BJ (cell line): ENCODE measurements at regions of chr11 and their contacts with region 1.

Region 1: DNA sequence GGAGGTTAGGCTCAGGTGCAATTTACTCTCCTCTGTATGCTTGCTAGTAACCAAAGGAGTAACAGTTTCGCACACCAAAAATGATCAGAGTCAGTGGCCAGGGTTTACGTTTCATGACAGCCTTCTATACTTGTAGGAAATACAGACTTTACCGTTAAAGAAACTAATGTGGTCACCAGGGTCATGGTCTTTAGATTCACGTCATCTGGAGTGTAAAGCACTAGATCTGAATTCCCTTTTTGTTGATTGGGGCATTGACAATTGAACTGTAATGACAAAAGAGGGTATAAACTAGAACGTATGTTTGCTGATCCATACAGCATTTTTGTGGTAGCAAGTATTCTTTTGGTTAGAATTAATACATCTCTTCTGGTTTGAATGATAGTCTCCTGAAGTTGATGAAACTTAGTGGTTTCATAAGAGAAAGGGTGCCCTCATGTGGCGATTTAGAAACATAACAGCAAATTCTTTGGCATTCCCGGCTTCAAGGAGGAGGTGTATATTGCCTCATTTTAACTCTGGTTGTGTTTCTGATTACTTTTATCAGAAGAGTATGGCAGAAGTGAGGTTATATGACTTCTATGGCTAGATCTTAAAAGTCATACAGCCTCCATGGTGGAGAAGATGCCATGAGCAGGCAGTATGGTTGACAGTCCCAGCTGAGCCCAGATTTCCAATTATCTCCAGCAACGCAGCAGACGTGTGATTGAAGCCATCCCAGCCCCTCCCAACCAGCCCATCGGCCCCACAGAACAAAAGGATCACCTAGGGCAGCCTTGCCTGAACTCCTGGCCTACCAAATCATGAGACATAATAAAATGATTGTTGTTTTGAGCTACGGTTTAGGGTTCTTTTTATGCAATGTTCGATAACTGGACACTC is 35.1 kb downstream of the MMP7 start:
- DNase-seq: no peak
- H3K4me3 ChIP-seq: no peak overlapping the region
- H3K27me3 ChIP-seq: no peaks in the 10 kb centered on the region
- CTCF ChIP-seq: peak; percentile 53

Region 2: DNA sequence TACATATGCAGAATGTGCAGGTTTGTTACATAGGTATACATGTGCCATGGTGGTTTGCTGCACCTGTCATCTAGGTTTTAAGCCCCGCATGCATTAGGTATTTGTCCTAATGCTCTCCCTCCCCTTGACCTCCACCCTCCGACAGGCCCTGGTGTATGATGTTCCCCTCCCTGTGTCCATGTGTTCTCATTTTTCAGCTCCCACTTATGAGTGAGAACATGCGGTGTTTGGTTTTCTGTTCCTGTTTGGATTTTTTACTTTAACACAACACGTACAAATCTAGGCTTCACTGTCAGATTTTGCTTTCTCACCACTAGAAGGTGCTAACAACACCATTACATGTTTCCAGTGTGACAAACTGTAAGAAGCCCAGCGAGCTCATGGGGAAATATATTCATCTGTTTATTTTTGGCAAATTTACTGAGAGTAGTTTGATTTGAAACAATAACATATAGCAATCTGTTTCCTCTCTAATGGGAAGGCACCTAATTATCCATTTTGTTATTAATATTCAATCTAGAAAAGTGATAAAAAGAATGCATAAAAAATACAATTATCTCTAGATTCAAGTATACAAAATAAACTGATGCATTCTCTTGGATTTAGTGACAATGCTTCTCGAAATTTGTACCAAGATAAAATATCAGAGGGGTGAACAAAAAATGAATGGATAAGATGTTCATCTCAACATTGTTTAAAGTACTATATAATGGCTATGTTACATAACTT is 201.4 kb before region 1 on chr11:
- CTCF ChIA-PET with region 1: interaction called, 11 read pairs
- POLR2A ChIA-PET with region 1: no interaction called
- DNase-seq: no peak
- H3K4me3 ChIP-seq: no peak overlapping the region
- H3K27me3 ChIP-seq: no peaks in the 10 kb centered on the region
- CTCF ChIP-seq: peak; percentile 72

Region 3: DNA sequence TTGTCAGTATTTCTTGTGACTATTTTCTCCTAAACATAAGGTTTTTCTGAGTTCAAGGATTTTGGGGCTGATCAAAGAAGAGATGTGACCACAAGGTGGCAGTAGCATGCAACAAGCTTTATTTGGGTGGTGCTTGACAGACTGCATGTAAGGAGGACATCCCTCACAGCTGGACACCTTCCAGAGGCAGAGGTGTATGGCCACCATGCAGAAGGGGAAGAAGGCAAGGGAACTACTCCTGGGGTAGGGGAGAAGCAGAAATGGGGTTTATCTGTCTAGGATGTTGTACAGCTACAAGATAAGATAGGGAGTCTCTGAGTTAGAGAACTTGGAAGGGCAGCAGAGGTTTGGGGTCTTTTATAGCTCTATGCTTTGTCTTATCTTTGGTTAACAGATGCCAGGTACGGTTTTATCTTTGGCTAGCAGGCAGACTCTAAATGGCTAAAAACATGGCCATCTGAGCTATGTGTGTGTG is 153.5 kb before region 1 on chr11:
- CTCF ChIA-PET with region 1: interaction called, 30 read pairs
- POLR2A ChIA-PET with region 1: no interaction called
- DNase-seq: no peak
- H3K4me3 ChIP-seq: no peak overlapping the region
- H3K27me3 ChIP-seq: no peaks in the 10 kb centered on the region
- CTCF ChIP-seq: peak; percentile 81

Region 4: GRCh38 chr11:102367364-102367763 is 128.0 kb before region 1 on chr11:
- CTCF ChIA-PET with region 1: interaction called, 15 read pairs
- POLR2A ChIA-PET with region 1: no interaction called
- DNase-seq: no peak
- H3K4me3 ChIP-seq: no peak overlapping the region
- H3K27me3 ChIP-seq: no peaks in the 10 kb centered on the region
- CTCF ChIP-seq: 0 out of 2 replicates have a peak, but pooled peaks have one; percentile 19

Region 5: GRCh38 chr11:102390667-102391465 is 104.5 kb before region 1 on chr11:
- CTCF ChIA-PET with region 1: interaction called, 38 read pairs
- POLR2A ChIA-PET with region 1: no interaction called
- DNase-seq: no peak
- H3K4me3 ChIP-seq: no peak overlapping the region
- H3K27me3 ChIP-seq: no peaks in the 10 kb centered on the region
- CTCF ChIP-seq: peak; percentile 86